Naive thymus-derived CD4-positive, alpha-beta T cell (primary cell): ENCODE measurements at regions of chr19 and their contacts with region 1.

Region 1: GRCh38 chr19:32971715-32972540 is at the starts of genes CEP89 and FAAP24:
- DNase-seq: peak; percentile 89 to 99 (median 98)
- ATAC-seq: peak; percentile 98
- H3K4me3 ChIP-seq: peak within 1 kb of the TSS; percentile 78
- H3K4me3 Mint-ChIP-seq: peak within 1 kb of the TSS; percentile 96 to 100 (median 99)
- H3K27ac ChIP-seq: peak within 1 kb of the TSS; percentile 75
- H3K27ac Mint-ChIP-seq: peak within 1 kb of the TSS; percentile 92 to 97 (median 97)
- H3K4me1 ChIP-seq: peaks cover 0 to 5% of the 10 kb centered on the region in 2 donors
- H3K4me1 Mint-ChIP-seq: peaks cover 14 to 27% (median 20%) of the 10 kb centered on the region in 7 donors
- H3K27me3 ChIP-seq: no peaks in the 10 kb centered on the region
- H3K27me3 Mint-ChIP-seq: no peaks in the 10 kb centered on the region
- total RNA-seq, gene CEP89: 7.4 to 22.4 (median 20.1) TPM
- total RNA-seq, gene FAAP24: 0.71 to 7.2 (median 2.5) TPM

Region 2: DNA sequence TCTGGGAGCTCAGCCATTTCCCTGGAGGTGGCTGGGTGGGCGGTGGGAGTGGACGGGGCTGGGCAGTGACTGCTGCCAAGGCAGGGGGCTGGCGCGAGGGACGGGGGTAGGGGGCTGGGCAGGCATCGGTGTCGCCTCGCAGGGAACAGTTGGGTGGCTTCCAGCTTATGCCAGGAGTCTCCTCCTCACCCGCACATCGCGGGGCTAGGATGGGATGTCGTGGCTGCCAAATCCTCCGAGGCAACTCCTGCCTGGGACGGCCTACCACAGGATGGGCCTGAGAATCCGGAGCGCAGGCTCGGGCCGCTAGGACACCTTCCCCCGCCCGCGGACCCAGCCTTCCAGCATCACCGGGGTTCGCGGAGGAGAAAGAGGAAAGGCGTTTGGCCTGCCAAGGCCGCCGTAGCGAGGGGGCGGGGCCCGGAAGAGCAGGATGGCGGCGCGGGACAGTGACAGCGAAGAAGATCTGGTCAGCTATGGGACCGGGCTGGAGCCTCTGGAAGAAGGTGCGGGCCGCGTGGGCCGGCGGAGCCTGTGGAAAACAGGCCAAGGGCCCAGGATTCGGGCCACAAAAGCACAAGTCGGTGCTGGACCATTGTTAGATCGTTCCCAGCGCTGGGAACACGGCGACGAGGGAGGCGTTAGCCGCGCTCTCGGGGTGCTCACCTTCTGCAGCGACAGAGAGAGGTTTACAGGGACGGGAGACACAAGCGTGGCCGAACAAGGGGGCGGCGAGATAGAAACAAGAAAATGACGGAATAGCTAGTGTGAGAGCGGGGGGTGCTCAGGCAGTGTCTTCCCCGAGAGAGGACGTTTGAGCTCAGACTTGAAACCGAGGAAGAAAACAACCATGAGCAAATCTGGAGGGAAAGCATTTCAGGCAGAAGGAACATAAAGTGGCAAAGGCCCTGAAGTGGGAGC is 109.1 kb after region 1 on chr19 and contains the start of gene GPATCH1:
- CTCF ChIA-PET with region 1: no interaction called
- POLR2A ChIA-PET with region 1: interaction called, 3 read pairs
- intact Hi-C with region 1: loop called (anchors 1 to 2 kb)
- DNase-seq: peak; percentile 79 to 92 (median 85)
- ATAC-seq: peak; percentile 99
- H3K4me3 ChIP-seq: peak within 1 kb of the TSS; percentile 98
- H3K4me3 Mint-ChIP-seq: peak within 1 kb of the TSS; percentile 92 to 99 (median 94)
- H3K27ac ChIP-seq: peak within 1 kb of the TSS; percentile 84
- H3K27ac Mint-ChIP-seq: peak within 1 kb of the TSS; percentile 89 to 99 (median 94)
- H3K4me1 ChIP-seq: peaks cover 10 to 11% of the 10 kb centered on the region in 2 donors
- H3K4me1 Mint-ChIP-seq: peaks cover 20 to 39% (median 30%) of the 10 kb centered on the region in 7 donors
- H3K27me3 ChIP-seq: no peaks in the 10 kb centered on the region
- H3K27me3 Mint-ChIP-seq: no peaks in the 10 kb centered on the region
- total RNA-seq, gene GPATCH1: 11.2 to 20.0 (median 14.4) TPM

Region 3: GRCh38 chr19:33118643-33119042 is 146.7 kb after region 1 on chr19:
- CTCF ChIA-PET with region 1: interaction called, 3 read pairs
- POLR2A ChIA-PET with region 1: interaction called, 3 read pairs
- intact Hi-C with region 1: loop called (anchors 1 kb)
- DNase-seq: no peak
- ATAC-seq: no peak
- H3K4me3 ChIP-seq: no peak overlapping the region
- H3K4me3 Mint-ChIP-seq: no peak overlapping the region
- H3K27ac ChIP-seq: no peak overlapping the region
- H3K27ac Mint-ChIP-seq: peak overlapping the region in 1 of 9 donors; percentile 59
- H3K4me1 ChIP-seq: no peaks in the 10 kb centered on the region
- H3K4me1 Mint-ChIP-seq: no peaks in the 10 kb centered on the region
- H3K27me3 ChIP-seq: no peaks in the 10 kb centered on the region
- H3K27me3 Mint-ChIP-seq: no peaks in the 10 kb centered on the region